ENCODE measurements at regions of chr7 and their contacts with region 1.

Region 1: DNA sequence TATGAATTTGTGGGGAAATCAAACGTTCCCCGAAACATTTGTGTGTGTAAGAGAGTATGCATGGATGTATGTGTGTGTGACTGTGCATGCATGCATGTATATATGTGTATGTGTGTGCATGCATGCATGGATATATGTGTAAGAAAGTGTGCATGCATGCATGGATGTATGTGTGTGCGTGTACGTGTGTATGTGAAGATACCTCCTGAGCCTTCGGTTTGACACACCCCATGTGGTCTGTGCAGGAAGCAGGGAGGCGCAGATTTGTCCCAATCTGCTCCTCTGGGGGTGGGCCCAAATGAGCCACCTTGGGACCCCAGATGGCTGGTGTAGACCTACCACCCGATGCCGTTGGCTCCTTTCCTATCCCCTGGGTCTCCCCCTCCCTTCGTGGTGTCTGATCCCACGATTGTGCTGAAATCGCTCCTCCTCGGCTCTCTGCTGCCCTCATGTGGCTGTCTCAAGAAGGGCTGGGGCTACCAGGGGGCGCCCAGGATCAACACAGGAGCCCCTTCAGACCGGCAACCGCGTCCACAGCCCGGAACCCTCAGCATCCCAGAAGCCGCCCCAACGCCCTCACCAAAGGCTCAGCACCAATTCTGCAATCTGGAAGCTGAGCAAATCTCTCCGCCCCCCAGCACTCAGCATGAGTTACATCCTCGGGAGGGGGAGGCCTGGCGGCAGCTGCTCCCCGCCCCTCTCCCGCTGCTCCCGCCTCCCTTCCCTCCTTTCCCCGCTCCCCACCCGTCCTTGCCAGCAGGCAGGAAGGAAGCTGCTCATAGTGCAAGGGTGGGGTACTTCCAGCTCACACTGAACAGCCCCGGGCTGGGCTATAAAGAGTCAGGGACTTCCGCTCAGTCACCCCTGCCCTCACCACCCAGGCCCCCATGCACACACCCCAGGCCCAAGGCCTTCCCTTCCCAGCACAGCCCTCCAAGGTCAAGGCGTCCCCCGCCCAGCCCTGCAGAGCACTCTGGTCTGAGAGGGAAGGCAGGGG is 2.3 kb upstream of the NOS3 start:
- DNase-seq: no peak
- H3K4me3 ChIP-seq: no peak overlapping the region
- H3K27me3 ChIP-seq: peaks cover 4% of the 10 kb centered on the region
- CTCF ChIP-seq: peak; percentile 84

Region 2: GRCh38 chr7:150898475-150899011 is 90.0 kb before region 1 on chr7:
- CTCF ChIA-PET with region 1: interaction called, 28 read pairs
- POLR2A ChIA-PET with region 1: no interaction called
- DNase-seq: no peak
- H3K4me3 ChIP-seq: no peak overlapping the region
- H3K27me3 ChIP-seq: peaks cover 4% of the 10 kb centered on the region
- CTCF ChIP-seq: peak; percentile 96

Region 3: GRCh38 chr7:150903606-150904005 is 84.9 kb before region 1 on chr7:
- CTCF ChIA-PET with region 1: interaction called, 28 read pairs
- POLR2A ChIA-PET with region 1: no interaction called
- DNase-seq: no peak
- H3K4me3 ChIP-seq: no peak overlapping the region
- H3K27me3 ChIP-seq: peaks cover 4% of the 10 kb centered on the region; the same call in 1 of the 2 replicates
- CTCF ChIP-seq: no peak

Region 4: GRCh38 chr7:150962553-150963399 is 25.8 kb before region 1 on chr7:
- CTCF ChIA-PET with region 1: interaction called, 50 read pairs
- POLR2A ChIA-PET with region 1: no interaction called
- DNase-seq: no peak
- H3K4me3 ChIP-seq: no peak overlapping the region
- H3K27me3 ChIP-seq: peaks cover 3% of the 10 kb centered on the region
- CTCF ChIP-seq: peak; percentile 92

Region 5: GRCh38 chr7:150974468-150975391 is 13.8 kb before region 1 on chr7:
- CTCF ChIA-PET with region 1: interaction called, 23 read pairs
- POLR2A ChIA-PET with region 1: no interaction called
- DNase-seq: no peak
- H3K4me3 ChIP-seq: peak overlapping the region; percentile 39
- H3K27me3 ChIP-seq: peaks cover 28% of the 10 kb centered on the region
- CTCF ChIP-seq: peak; percentile 29